Sciatic nerve (tissue), 2 donors: ENCODE measurements at regions of chr11 and their contacts with region 1.

Region 1: DNA sequence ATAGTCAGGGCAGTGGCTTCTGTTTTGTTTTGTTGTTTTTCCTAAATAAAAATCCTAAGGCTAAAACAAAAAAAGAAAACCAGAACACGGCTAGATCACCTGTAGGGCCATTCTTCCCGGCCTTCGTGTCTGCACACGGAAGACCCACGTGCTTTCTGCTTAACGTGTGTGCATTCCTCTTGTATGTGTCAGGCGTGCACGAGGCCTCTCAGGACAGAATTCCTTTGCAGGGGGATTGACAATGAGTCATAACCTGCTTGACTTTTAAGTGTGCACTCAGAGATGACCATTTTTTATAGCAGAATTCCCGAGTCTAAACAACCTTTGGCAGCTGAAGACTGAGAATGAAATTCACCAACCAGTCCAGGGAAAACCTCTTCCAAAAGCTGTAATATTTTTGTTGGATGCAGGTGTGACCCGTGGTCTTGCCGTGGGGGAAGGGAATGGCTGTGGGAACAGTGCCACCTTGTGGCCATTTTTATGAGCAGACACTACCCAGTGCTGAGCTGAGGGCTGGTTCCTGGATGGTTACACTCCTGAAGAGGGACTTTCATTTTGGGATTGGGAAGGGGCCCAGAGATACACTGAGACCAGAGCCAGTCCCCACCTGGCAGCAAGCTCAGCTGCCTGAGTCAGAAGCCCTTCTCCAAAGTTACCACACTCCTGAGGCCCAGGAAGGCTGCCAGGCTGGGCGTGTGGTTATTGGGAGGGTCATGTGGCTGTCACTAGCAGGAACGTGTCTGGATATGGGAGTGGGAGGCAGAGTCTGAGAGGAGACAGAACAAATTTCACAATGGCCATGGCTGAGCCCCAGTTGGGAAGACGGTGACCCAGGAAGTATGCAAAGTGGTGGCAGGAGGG is 35.8 kb upstream of the DKK3 start:
- DNase-seq: peak; percentile 89
- ATAC-seq: peak; percentile 93

Region 2: DNA sequence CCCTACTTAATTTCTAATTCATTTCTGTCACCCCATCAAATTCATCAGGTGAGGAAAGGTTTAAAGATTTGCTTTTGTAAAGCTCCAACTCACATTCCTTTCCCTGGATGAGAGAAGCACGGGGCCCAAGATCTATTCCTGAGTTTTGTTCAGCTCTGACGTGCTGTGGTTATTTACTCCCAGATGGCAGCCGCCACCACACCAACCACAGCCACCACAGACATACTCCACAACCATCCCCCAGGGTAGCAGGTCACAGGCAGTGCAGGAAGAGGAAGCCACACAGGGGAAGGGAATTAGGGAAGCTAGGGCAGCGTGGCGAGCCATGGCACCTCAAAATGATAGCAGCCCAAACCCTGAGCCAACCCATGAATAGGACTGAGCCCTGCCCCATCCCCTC is 627.7 kb before region 1 on chr11:
- intact Hi-C with region 1: no loop called
- DNase-seq: no peak
- ATAC-seq: peak; percentile 65

Region 3: GRCh38 chr11:11798586-11799438 is 245.4 kb before region 1 on chr11:
- intact Hi-C with region 1: loop called (anchors 10 kb)
- DNase-seq: peak; percentile 84
- ATAC-seq: peak; percentile 96

Region 4: GRCh38 chr11:11848891-11849746 is 195.1 kb before region 1 on chr11:
- intact Hi-C with region 1: no loop called
- DNase-seq: no peak
- ATAC-seq: peak; percentile 76

Region 5: GRCh38 chr11:11931461-11932055 is 112.6 kb before region 1 on chr11:
- intact Hi-C with region 1: loop called (anchors 10 kb)
- DNase-seq: no peak
- ATAC-seq: peak; percentile 76

Region 6: GRCh38 chr11:12235947-12236743 is 192.0 kb after region 1 on chr11:
- intact Hi-C with region 1: loop called (anchors 5 kb)
- DNase-seq: no peak
- ATAC-seq: peak; percentile 42

Region 7: GRCh38 chr11:12281571-12282478 is 237.6 kb after region 1 on chr11:
- intact Hi-C with region 1: loop called (anchors 2 kb)
- DNase-seq: peak; percentile 93
- ATAC-seq: peak; percentile 71